ENCODE measurements at regions of chr18 and their contacts with region 1.

Region 1: GRCh38 chr18:44679056-44679905 is 1.4 kb upstream of the SETBP1 start:
- DNase-seq: no peak
- ATAC-seq: peak; percentile 87
- H3K4me3 ChIP-seq: peak overlapping the region; percentile 78
- H3K27ac ChIP-seq: peak overlapping the region; percentile 82
- H3K4me1 ChIP-seq: peaks cover 14% of the 10 kb centered on the region
- H3K27me3 ChIP-seq: peaks cover 0 to 3% of the 10 kb centered on the region in 2 experiments; a peak in 1 of 4 replicates
- CTCF ChIP-seq: peak; percentile 68 to 92 (median 76)
- EP300 ChIP-seq: no peak
- POLR2A ChIP-seq: peak; percentile 56
- RAD21 ChIP-seq: peak; percentile 90

Region 2: DNA sequence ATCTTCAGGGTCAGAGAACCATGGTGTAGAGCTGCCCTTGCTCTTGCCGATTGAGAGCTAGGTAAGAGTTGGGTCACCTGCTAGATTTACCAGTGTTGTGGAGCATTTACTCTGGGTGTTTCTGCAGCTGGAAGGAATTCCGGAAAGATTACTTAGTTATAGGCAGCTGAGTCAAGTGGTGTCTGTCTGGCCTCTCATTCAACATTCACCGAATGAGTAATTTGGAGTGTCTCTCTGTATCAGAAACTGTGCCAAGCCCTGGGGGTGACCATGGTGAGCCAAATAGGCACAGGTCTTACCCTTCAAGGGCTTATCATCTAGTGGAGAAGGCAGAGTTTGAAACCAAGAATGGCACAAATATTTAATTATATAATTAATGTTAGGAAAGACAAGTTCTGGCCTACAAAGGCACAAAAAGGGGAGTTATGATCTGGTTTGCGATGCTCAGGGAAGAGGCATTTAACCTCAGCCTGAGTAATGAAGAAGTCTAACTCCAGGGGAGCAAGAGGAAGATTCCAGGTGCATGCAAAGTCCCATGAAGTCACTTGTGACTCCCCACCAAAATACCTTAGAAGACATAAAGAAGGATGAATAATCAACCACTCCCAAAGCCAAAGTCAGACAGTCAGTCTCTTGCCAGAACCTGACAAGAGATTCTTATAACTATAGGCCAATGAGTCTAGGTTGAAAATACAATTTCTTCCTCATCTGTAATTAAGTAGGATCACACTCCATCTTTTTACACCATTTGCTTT is 13.9 kb after region 1 on chr18:
- CTCF ChIA-PET with region 1: interaction called, 25 read pairs
- POLR2A ChIA-PET with region 1: interaction called, 5 read pairs
- RAD21 ChIA-PET with region 1: interaction called, 12 read pairs
- SMC1A ChIA-PET with region 1: interaction called, 37 read pairs
- in situ Hi-C with region 1: no loop called
- intact Hi-C with region 1: loop called (anchors 2 kb)
- DNase-seq: no peak
- ATAC-seq: peak; percentile 58
- H3K4me3 ChIP-seq: no peak overlapping the region
- H3K27ac ChIP-seq: no peak overlapping the region
- H3K4me1 ChIP-seq: peaks cover 2% of the 10 kb centered on the region; the same call in 1 of the 2 replicates
- H3K27me3 ChIP-seq: no peaks in the 10 kb centered on the region
- CTCF ChIP-seq: no peak
- EP300 ChIP-seq: no peak
- POLR2A ChIP-seq: no peak
- RAD21 ChIP-seq: no peak

Region 3: DNA sequence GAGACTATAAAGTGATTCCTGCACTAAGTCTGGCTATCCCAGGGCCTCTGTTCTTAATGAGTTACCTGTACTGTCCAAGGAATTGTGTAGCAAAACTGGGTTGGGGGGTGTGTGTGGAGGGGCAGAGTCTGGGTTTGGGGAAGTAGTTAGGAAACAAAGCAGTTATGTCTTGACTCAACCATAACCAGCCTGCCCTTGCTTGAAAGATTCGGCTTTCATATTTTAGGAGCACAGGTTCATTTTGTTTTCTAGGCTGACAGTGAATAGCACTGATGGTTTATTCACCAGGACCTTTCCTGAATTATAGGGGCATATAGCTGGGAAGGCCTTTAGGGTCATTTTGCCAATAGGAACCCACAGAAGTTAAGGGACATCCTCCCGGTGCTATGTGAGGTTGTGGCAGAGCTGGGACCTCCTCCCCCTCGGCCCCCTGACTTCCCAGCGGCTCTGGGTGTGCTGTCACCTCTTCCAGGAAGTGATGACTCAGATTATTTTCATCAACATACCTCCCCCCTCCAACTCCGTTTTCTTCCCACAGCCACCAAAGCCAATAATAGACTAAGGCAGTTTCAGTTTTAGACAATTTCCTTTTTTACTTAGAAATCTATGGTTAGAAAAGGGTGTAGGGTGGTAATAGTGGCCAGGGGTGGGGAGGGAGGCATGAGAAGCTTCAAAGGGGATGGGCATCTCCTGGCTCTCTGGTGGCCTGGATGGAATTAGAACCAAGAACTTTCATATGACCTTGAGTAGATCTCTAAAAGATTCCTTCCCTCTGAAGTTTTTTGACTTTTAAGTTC is 46.2 kb after region 1 on chr18:
- CTCF ChIA-PET with region 1: interaction called, 8 read pairs
- POLR2A ChIA-PET with region 1: interaction called, 8 read pairs
- RAD21 ChIA-PET with region 1: interaction called, 63 read pairs
- SMC1A ChIA-PET with region 1: interaction called, 31 read pairs
- in situ Hi-C with region 1: no loop called
- intact Hi-C with region 1: loop called (anchors 2 kb)
- DNase-seq: peak; percentile 71
- ATAC-seq: peak; percentile 73
- H3K4me3 ChIP-seq: peak overlapping the region; percentile 33; the same call in 1 of the 2 replicates
- H3K27ac ChIP-seq: peak overlapping the region; percentile 35
- H3K4me1 ChIP-seq: peaks cover 73% of the 10 kb centered on the region
- H3K27me3 ChIP-seq: no peaks in the 10 kb centered on the region
- CTCF ChIP-seq: no peak
- EP300 ChIP-seq: peak; percentile 50 to 89; a peak in 3 of 4 replicates
- POLR2A ChIP-seq: no peak
- RAD21 ChIP-seq: peak; percentile 30; the same call in 1 of the 2 replicates

Region 4: DNA sequence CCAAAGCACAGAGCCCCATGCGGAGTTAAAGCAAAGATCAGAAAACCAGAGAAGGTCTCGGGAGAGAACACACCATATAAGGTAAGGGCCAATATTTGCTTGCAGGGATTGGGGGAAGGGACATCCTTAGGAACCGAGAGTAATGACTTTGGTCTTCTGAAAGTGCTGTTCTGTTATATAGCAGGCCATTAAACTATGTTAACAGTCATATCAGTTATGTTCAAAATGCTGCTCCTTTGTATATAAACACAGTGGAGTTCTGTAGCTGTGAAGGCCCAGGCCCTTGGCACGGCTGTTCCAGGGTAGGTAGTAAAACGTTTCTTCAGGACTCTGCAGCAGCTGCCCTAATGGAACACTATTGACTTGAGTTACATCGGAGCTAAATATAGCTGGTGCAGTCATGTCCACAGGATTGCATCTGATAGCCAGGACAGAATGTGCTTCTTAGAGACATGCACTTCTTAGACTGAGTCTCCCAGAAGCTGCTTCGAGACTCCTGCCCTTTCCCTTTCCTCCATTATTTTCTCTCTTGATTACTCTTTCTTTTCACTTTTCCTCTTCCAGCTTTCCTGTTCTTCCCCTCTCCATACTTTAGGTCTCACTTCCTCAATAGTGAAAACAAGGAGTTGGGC is 123.9 kb after region 1 on chr18:
- CTCF ChIA-PET with region 1: interaction called, 4 read pairs
- POLR2A ChIA-PET with region 1: interaction called, 5 read pairs
- RAD21 ChIA-PET with region 1: interaction called, 7 read pairs
- SMC1A ChIA-PET with region 1: interaction called, 11 read pairs
- in situ Hi-C with region 1: no loop called
- intact Hi-C with region 1: loop called (anchors 1 kb)
- DNase-seq: no peak
- ATAC-seq: peak; percentile 52
- H3K4me3 ChIP-seq: 0 out of 2 replicates have a peak overlapping the region, but pooled peaks have one; percentile 12
- H3K27ac ChIP-seq: no peak overlapping the region
- H3K4me1 ChIP-seq: peaks cover 43% of the 10 kb centered on the region
- H3K27me3 ChIP-seq: no peaks in the 10 kb centered on the region
- CTCF ChIP-seq: no peak
- EP300 ChIP-seq: no peak
- POLR2A ChIP-seq: no peak
- RAD21 ChIP-seq: no peak

Region 5: DNA sequence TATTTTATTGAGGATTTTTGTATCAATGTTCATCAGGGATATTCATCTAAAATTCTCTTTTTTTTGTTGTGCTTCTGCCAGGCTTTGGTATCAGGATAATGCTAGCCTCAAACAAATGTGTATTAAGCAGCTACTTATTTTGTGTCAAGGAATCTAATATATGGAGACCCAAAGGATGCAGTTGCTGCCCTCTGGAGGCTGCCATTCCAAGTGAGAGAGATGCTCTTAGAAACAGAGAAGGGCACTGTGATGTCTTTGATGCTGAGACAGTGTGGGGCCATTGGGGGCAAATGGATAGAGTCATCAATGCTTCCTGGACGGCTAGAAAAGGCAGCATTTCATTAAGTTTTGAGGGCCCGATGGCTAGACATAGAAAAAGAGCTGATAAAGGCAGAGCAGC is 294.0 kb after region 1 on chr18:
- CTCF ChIA-PET with region 1: interaction called, 4 read pairs
- POLR2A ChIA-PET with region 1: interaction called, 3 read pairs
- RAD21 ChIA-PET with region 1: no interaction called
- SMC1A ChIA-PET with region 1: no interaction called
- in situ Hi-C with region 1: no loop called
- intact Hi-C with region 1: loop called (anchors 5 kb)
- DNase-seq: no peak
- ATAC-seq: peak; percentile 48; the same call in 2 of the 3 replicates
- H3K4me3 ChIP-seq: no peak overlapping the region
- H3K27ac ChIP-seq: no peak overlapping the region
- H3K4me1 ChIP-seq: no peaks in the 10 kb centered on the region
- H3K27me3 ChIP-seq: no peaks in the 10 kb centered on the region
- CTCF ChIP-seq: peak; percentile 14 to 26 (median 18); a peak in 1 of 6 replicates
- EP300 ChIP-seq: no peak
- POLR2A ChIP-seq: no peak
- RAD21 ChIP-seq: peak; percentile 57

Region 6: DNA sequence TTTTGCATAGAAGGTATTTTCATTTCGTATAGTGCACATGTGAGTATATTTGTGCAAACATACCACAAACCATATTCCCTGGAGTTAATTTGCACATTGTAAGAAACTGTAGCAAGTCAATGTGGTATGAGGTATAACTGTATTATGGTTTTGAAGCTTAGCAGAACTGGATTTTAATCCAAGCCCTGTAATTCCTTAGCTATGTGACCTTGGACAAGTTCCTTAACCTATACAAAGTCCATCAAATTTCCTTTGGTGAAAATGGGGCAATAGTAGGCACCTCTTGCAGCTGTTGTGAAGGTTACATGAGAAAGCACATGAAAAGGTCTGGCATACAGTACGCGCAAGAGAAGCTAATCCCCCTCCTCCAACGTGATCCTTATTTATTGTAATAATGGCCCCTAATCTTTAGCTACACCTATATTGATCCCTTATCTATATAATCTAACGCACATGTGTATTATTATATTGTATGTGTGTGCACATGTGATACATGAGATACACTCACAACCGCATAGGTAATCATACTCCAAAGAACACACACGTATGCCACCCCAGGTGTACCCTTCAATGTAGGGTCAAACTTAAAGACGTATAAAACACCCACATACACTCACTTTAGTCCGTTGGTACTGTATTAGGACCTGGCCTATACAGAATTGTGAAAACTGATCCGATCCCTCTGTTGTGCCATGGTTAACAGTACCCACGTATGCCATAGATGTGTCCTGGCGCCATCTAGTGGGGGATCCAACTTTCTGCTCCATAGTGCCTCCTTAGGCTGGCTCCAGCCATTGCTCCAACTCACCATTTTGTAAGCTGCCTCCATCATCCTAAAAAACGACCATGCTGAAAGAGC is 533.1 kb after region 1 on chr18:
- CTCF ChIA-PET with region 1: interaction called, 12 read pairs
- POLR2A ChIA-PET with region 1: interaction called, 4 read pairs
- RAD21 ChIA-PET with region 1: interaction called, 10 read pairs
- SMC1A ChIA-PET with region 1: interaction called, 7 read pairs
- in situ Hi-C with region 1: loop called (anchors 5 kb)
- intact Hi-C with region 1: loop called (anchors 1 kb)
- DNase-seq: peak; percentile 58
- ATAC-seq: peak; percentile 100
- H3K4me3 ChIP-seq: no peak overlapping the region
- H3K27ac ChIP-seq: no peak overlapping the region
- H3K4me1 ChIP-seq: no peaks in the 10 kb centered on the region
- H3K27me3 ChIP-seq: no peaks in the 10 kb centered on the region
- CTCF ChIP-seq: peak; percentile 99 to 100 (median 99); a peak in 5 of 6 replicates
- EP300 ChIP-seq: no peak
- POLR2A ChIP-seq: no peak
- RAD21 ChIP-seq: peak; percentile 96